ENCODE measurements at regions of chr3 and their contacts with region 1.

Region 1: GRCh38 chr3:63961891-63962290 is 49.7 kb upstream of the SCAANT1 start:
- H3K4me3 ChIP-seq: no peak overlapping the region
- H3K27ac ChIP-seq: no peak overlapping the region
- H3K4me1 ChIP-seq: peaks cover 9% of the 10 kb centered on the region
- CTCF ChIP-seq: no peak

Region 2: DNA sequence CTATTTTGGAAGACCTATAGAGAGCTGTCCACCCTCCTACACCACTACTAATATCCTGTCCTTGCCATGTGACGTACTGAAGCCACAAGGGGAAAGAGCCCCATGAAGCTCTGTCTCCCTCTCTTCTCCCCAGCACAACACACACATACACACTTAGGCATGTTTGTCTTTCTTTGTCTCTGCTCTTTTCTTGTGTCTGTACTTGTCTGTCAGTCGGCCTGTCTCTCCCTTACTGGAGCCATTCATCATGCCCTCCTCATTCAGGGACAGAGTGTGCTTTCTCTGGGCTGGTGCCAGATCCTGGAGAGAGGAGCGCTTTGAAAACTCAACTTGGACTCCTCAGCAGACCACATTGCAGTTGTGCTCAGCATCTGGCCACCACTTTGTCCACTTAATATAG is 13.8 kb after region 1 on chr3:
- CTCF ChIA-PET with region 1: interaction called, 12 read pairs
- POLR2A ChIA-PET with region 1: no interaction called
- H3K4me3 ChIP-seq: no peak overlapping the region
- H3K27ac ChIP-seq: no peak overlapping the region
- H3K4me1 ChIP-seq: peaks cover 16% of the 10 kb centered on the region
- CTCF ChIP-seq: no peak

Region 3: GRCh38 chr3:64484289-64484992 is 522.5 kb after region 1 on chr3:
- CTCF ChIA-PET with region 1: interaction called, 11 read pairs
- POLR2A ChIA-PET with region 1: no interaction called
- H3K4me3 ChIP-seq: no peak overlapping the region
- H3K27ac ChIP-seq: no peak overlapping the region
- H3K4me1 ChIP-seq: no peaks in the 10 kb centered on the region; the same call in 1 of the 2 replicates
- CTCF ChIP-seq: peak; percentile 63

Region 4: GRCh38 chr3:65665915-65666314 is 1704.0 kb after region 1 on chr3:
- CTCF ChIA-PET with region 1: no interaction called
- POLR2A ChIA-PET with region 1: no interaction called
- H3K4me3 ChIP-seq: no peak overlapping the region
- H3K27ac ChIP-seq: no peak overlapping the region
- H3K4me1 ChIP-seq: no peaks in the 10 kb centered on the region
- CTCF ChIP-seq: no peak

Measured in HEK293 (cell line).